Activated naive CD4-positive, alpha-beta T cell treated with anti-CD3 and anti-CD28 coated beads for 36 hours (primary cell): ENCODE measurements at regions of chr2 and their contacts with region 1.

Region 1: DNA sequence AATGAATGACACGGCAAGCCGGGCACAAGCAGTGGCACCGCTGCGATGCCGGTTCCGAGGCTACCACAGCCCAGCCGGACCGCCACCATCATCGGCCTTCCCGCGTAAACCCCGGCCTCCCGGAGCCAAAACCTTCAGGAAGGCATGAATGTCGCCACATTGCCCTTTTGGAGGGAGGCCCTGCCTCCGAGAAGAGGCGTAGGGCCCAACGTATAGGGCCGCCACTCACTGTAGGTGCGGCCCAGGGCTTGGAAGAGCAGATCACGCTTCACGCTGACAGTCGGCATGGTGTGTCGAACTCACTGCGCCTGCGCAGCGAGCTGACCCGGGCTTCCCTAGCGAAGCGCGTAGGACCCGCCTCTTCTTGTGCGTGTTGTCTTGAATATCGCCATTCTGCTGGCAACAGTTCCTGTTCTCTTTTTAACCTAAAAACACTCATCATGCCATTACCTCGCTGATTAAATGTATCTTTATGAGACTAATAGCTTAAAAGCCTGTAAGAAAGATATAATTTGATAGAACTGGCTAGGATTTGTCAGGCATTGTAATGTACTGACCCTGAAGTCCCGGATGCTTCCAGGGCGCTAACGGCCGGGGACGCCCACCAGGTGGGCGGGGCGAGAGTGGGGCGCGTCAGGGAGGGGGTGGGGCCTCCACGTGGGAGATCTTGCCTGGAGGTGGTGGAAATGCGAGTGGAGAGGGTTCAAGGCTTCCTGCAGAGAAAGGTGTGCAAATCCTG is at the start of gene FARSB:
- DNase-seq: peak; percentile 94
- H3K4me3 Mint-ChIP-seq: peak within 1 kb of the TSS; percentile 98
- H3K27ac Mint-ChIP-seq: peak within 1 kb of the TSS; percentile 98
- H3K4me1 Mint-ChIP-seq: peaks cover 37% of the 10 kb centered on the region
- H3K27me3 Mint-ChIP-seq: no peaks in the 10 kb centered on the region
- total RNA-seq, gene FARSB: 46.4 to 46.8 TPM

Region 2: DNA sequence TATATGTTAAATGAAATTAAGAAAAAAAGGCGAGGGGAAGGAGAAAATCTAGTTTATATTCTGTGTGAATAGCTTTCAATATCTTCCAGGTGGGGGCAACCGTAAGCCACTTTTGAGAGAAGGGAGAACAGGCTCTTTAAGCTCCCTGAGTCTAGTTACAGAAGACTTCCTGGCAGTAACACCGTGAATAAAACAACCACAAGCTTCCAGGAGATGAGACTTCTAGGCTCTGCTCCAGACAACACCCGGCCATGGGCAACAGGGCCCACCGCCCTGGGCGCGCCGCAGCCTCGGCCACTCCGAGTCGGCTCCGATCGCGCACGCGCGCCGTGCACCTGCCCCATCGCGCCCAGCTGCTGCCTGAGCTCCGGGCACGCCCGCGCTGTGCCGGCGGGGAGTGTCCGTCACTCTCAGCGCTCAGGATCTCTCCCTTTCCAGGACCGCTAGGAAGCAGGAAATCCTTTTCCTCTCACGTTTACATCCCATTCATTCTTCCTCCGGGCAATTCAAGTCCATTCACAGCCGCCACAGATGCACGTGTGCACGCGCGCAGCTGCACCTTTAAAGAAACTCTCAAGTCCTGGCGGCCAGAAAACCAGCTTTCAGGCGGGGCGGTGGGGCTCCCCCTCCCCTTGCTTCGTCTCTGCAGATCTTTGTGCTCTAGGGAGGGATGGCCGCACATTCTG is 337.8 kb before region 1 on chr2:
- CTCF ChIA-PET with region 1: interaction called, 4 read pairs
- intact Hi-C with region 1: loop called (anchors 2 kb)
- DNase-seq: peak; percentile 58
- H3K4me3 Mint-ChIP-seq: peak overlapping the region; percentile 74
- H3K27ac Mint-ChIP-seq: no peak overlapping the region
- H3K4me1 Mint-ChIP-seq: peaks cover 6% of the 10 kb centered on the region
- H3K27me3 Mint-ChIP-seq: peaks cover 66% of the 10 kb centered on the region

Region 3: DNA sequence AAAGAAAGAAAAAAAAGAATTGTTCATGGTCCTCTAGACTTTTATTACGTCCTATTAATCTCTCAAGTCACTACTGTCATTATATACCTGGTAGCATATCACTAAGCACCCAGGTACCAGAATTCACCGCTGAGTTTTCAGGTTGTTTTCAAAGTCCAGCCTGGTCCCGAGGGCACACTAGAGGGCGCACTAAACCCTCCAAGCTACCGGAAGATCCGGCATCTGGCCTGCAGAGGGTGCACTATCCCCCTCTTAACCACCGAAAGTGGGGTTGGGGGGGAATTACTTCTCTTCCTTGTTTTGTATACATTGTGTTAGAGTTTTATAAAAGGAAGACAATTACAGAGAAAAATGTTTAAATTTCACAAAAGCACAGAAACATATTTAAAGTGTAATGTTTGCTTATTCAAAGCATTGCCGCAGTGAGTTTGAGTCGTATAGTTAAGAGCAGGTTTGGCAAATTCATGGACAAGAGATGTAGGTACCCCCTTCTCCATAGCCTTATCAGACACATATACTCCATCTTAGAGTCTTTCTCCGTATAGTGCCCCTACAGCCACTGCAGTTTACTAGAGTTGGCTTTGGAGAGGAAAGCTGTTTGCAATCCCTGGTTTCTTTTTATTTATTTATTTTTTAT is 34.7 kb after region 1 on chr2:
- CTCF ChIA-PET with region 1: interaction called, 3 read pairs
- intact Hi-C with region 1: loop called (anchors 1 kb)
- DNase-seq: peak; percentile 84
- H3K4me3 Mint-ChIP-seq: no peak overlapping the region
- H3K27ac Mint-ChIP-seq: no peak overlapping the region
- H3K4me1 Mint-ChIP-seq: peaks cover 8% of the 10 kb centered on the region
- H3K27me3 Mint-ChIP-seq: no peaks in the 10 kb centered on the region

Region 4: DNA sequence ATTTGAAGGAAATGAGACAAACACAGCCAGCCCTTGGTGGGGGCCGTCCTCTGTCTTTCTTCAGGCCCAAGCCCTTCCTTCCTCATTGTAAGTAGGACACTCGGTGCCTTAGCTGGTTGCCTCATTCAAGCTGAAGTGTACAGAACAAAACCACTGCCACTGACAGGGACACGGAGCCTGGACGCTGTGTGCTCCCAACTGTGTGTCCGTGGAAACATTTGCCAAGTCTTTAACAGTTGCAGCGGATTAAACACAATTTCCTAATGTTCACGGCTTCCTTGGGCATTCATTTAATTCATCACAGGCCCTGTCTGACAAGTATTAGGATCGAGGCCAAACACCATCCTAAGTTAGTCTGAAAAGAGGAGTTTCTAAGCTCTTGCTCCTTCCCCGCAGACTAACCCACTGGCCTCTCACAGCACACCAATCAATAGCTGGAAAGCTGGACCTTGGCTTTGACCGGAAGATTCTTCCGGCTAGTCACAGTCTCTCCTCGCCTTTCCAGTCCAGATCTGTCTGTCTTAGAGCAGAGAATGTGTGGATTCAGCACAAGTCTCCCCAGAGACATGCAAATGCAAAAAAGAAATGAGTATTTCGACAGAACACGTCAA is 136.2 kb after region 1 on chr2:
- CTCF ChIA-PET with region 1: no interaction called
- intact Hi-C with region 1: loop called (anchors 2 kb)
- DNase-seq: no peak
- H3K4me3 Mint-ChIP-seq: no peak overlapping the region
- H3K27ac Mint-ChIP-seq: no peak overlapping the region
- H3K4me1 Mint-ChIP-seq: peaks cover 20% of the 10 kb centered on the region
- H3K27me3 Mint-ChIP-seq: no peaks in the 10 kb centered on the region

Region 5: GRCh38 chr2:224025874-224026273 is 1369.9 kb after region 1 on chr2:
- CTCF ChIA-PET with region 1: no interaction called
- intact Hi-C with region 1: loop called (anchors 1 kb)
- DNase-seq: peak; percentile 84
- H3K4me3 Mint-ChIP-seq: peak overlapping the region; percentile 64
- H3K27ac Mint-ChIP-seq: peak overlapping the region; percentile 95
- H3K4me1 Mint-ChIP-seq: peaks cover 84% of the 10 kb centered on the region
- H3K27me3 Mint-ChIP-seq: no peaks in the 10 kb centered on the region